ENCODE measurements at regions of chr1 and their contacts with region 1.

Region 1: DNA sequence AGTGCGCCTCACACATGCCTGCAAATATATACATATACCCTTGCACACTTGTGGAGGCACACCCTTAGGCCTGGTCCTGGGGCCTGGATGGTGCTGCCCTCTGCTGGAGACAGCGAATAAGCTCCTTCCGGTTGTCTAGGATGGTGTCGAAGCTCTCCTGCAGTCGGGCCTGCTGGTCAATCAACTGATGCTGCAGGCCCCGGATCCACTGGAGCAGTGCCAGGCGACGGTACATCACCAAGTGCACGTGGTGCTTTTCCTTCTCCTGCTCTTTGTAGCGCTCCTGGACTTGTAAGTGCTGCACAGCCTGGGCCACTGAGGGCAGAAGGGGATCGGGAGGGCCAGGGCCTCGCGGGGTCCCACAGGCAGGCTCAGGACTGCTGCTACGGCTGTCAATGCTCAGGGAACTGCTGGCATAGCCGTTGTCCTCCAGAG is 3.1 kb downstream of the C1orf216 start:
- DNase-seq: peak; percentile 78

Region 2: DNA sequence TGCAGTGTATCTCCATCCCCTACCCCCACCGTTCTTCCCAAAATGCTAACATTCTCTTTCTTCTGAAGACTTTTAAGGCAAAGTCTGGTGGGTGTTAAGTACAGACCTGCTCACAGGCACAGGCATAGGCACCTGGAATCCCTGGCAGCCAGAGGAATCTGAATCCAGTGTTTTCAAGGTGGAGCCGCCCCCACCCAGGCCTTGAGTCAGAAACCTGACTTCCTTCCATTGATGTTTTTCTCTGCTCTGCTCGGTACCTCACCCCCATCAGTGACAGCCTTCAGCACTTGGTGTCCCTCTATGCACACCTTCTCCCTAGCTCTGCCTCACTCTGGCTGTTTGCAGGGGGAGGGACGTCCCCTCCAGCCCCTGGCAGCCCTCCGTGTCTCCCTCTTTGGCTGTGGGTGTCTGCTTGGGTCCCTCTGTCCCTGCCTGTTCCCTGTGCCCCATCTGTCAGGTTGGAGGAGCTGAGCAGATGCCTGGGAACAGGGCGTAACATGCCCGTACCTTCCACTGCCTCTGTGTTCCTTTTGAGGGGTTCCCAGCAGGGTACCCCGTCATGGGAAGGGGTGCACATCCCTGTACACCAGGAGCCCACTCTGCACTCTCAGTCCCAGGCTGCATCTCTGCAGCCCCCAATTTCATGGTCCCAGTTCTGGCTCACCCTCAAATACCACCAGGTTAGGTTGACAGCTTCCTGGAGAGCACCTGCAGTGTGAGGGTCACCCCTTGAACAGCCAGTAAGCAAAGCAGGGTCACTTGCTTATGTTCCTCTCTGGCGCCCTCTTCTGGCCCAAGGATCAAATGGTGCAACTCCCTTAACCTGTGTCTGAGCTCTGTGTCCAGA is 151.3 kb before region 1 on chr1:
- in situ Hi-C with region 1: loop called (anchors 10 kb)
- DNase-seq: peak; percentile 62

Measured in KBM-7 (cell line).